Activated T-helper 2 cell treated with anti-CD3 and anti-CD28 coated beads, Interferon-gamma antibody, Interleukin-2, Interleukin-4, amounts not matched to agents 10 μg/mL and 5 μg/mL and 100 μg/mL, durations not matched to agents 14 hours and 24 hours and 36 hours (primary cell): ENCODE measurements at regions of chr1 and their contacts with region 1.

Region 1: DNA sequence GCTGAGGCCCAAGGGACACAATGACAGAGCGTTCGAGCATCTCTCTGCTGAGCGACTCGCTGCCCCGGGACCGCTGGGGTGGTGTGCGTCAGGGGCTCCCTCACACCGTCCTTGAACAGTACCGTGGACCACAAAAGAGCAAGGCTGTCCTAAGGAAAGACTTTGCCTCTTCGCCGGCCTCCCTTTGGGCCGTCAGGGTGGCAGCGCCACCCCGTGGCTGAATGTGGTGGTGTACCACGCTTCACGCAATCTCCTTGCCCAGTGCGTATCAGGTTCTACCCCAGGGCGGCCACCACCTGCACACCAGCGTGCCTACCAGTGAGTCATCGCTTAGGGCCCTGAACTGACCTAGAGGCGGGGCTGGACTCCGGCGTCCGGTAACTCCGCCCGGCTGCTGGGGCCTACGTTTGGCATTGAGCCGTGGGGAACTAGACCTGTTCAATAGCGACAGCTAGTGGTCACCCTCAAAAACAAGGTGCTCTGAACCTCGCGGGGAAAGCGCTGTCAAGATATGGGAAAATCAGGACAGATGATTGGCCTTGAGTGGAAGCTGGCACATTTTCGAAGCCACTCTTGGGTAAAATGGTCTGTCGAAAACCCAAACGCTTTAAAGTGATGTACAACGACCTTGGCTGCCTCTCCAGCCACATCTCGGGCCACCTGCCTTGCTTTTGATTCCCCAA is 8.1 kb upstream of the TRAF3IP3 start:
- DNase-seq: peak; percentile 79
- H3K4me3 Mint-ChIP-seq: peak overlapping the region; percentile 72
- H3K27ac Mint-ChIP-seq: peak overlapping the region; percentile 92
- H3K4me1 Mint-ChIP-seq: peaks cover 68% of the 10 kb centered on the region
- H3K27me3 Mint-ChIP-seq: no peaks in the 10 kb centered on the region

Region 2: DNA sequence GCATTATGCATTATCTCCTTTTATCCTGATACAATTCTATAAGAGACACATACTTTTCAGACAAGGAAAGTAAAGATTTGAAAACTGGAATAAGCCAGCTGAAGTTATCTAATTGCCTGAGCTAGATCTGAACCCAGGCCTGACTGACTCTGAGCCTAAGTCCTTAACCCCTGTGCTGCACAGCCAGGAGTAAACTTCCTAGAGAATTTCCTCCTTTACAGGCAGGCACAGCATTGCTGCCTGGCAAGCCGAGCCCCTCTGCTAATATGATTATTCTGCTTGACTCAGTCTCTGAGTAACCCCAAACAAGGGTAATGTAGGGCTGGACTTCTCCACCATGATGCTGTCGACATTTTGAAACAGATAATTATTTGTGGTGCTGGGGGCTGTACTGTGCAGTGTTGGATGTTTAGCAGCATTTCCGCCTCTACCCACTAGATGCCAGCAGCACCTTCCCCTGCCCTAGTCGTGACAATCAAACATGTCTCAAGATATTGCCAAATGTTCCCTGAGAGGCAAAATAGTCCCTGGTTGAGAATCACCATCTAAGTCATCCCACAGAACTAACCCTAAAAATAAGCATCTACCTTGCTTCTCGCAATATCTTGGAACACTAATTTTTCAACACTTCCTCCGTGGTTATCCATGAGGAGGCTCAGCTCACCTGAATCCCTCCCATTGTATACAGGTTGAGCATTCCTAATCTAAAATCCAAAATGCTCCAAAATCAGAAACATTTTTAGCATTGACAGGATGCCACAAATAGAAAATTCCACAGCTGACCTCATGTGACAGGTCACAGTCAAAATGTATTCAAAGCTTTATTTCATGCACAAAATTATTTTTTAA is 145.7 kb before region 1 on chr1:
- intact Hi-C with region 1: loop called (anchors 1 kb)
- DNase-seq: no peak
- H3K4me3 Mint-ChIP-seq: no peak overlapping the region
- H3K27ac Mint-ChIP-seq: no peak overlapping the region
- H3K4me1 Mint-ChIP-seq: peaks cover 4% of the 10 kb centered on the region
- H3K27me3 Mint-ChIP-seq: peaks cover 27% of the 10 kb centered on the region

Region 3: GRCh38 chr1:209659909-209660308 is 87.8 kb before region 1 on chr1:
- intact Hi-C with region 1: loop called (anchors 1 kb)
- DNase-seq: no peak
- H3K4me3 Mint-ChIP-seq: peak overlapping the region; percentile 16
- H3K27ac Mint-ChIP-seq: peak overlapping the region; percentile 79
- H3K4me1 Mint-ChIP-seq: peaks cover 25% of the 10 kb centered on the region
- H3K27me3 Mint-ChIP-seq: no peaks in the 10 kb centered on the region

Region 4: GRCh38 chr1:209710093-209710492 is 37.6 kb before region 1 on chr1:
- intact Hi-C with region 1: loop called (anchors 2 kb)
- DNase-seq: no peak
- H3K4me3 Mint-ChIP-seq: peak overlapping the region; percentile 10
- H3K27ac Mint-ChIP-seq: peak overlapping the region; percentile 92
- H3K4me1 Mint-ChIP-seq: peaks cover 79% of the 10 kb centered on the region
- H3K27me3 Mint-ChIP-seq: no peaks in the 10 kb centered on the region

Region 5: DNA sequence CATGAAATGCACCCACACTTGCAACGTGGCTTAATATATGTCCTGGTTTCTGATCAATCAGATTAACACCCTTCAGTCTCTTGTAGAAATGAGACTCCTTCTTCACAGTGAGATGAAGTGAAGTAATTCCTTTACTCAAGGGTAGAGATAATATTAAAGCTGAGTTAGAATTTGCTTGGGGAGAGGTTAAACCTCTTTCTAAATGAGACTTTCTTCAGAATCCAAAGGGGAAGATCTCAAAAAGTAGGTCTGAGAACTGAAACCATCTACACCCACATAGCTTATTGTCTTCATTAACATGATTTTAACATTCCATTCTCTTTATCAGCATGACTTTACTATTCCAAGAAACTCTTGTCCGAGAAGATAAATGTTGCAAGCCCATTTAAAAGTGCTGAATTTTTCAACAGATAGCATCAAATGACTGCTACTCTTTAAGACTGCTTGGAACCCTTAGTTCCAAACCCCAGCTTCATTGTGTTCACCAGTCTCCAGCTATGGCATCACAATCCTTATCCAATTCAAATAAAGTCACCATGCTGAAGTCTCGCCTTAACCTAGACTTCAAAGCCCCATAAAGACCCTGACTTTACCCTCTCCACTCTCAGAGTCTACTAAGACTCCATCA is 11.1 kb before region 1 on chr1:
- intact Hi-C with region 1: loop called (anchors 1 kb)
- DNase-seq: no peak
- H3K4me3 Mint-ChIP-seq: no peak overlapping the region
- H3K27ac Mint-ChIP-seq: peak overlapping the region; percentile 93
- H3K4me1 Mint-ChIP-seq: peaks cover 54% of the 10 kb centered on the region
- H3K27me3 Mint-ChIP-seq: no peaks in the 10 kb centered on the region